ENCODE measurements at regions of chr3 and their contacts with region 1.

Region 1: GRCh38 chr3:39189959-39190269 is 2.5 kb downstream of the XIRP1 start:
- DNase-seq: peak; percentile 80
- H3K4me3 Mint-ChIP-seq: no peak overlapping the region
- H3K27ac Mint-ChIP-seq: no peak overlapping the region
- H3K4me1 Mint-ChIP-seq: peaks cover 7% of the 10 kb centered on the region
- H3K27me3 Mint-ChIP-seq: no peaks in the 10 kb centered on the region
- CTCF ChIP-seq: peak; percentile 69

Region 2: GRCh38 chr3:38960953-38961622 is 228.8 kb before region 1 on chr3:
- CTCF ChIA-PET with region 1: no interaction called
- POLR2A ChIA-PET with region 1: no interaction called
- intact Hi-C with region 1: no loop called
- DNase-seq: peak; percentile 53
- H3K4me3 Mint-ChIP-seq: no peak overlapping the region
- H3K27ac Mint-ChIP-seq: no peak overlapping the region
- H3K4me1 Mint-ChIP-seq: no peaks in the 10 kb centered on the region
- H3K27me3 Mint-ChIP-seq: no peaks in the 10 kb centered on the region
- CTCF ChIP-seq: peak; percentile 31

Region 3: GRCh38 chr3:39126532-39127071 is 63.3 kb before region 1 on chr3:
- CTCF ChIA-PET with region 1: interaction called, 46 read pairs
- POLR2A ChIA-PET with region 1: interaction called, 3 read pairs
- intact Hi-C with region 1: no loop called
- DNase-seq: peak; percentile 72
- H3K4me3 Mint-ChIP-seq: no peak overlapping the region
- H3K27ac Mint-ChIP-seq: no peak overlapping the region
- H3K4me1 Mint-ChIP-seq: peaks cover 12% of the 10 kb centered on the region
- H3K27me3 Mint-ChIP-seq: no peaks in the 10 kb centered on the region
- CTCF ChIP-seq: peak; percentile 51

Region 4: DNA sequence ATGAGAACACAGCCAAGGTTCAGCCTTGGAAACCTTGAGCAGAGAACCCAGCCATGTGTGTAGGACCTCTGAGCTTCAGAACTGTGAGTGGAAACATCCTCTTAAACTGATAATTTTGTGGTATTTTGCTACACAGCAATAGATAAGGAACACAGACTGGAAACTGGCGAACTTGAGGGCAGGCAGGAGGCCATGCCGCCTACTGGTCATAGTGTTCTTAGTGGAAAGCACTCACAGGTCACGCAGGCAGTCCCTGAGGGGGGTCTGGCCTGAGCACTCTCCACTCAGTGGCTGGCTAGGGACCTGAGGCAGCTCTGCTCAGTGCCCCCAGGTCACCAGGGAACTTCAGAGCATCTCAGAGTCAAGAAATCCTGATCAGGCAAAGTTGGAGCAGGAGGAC is 12.2 kb after region 1 on chr3:
- CTCF ChIA-PET with region 1: interaction called, 51 read pairs
- POLR2A ChIA-PET with region 1: interaction called, 3 read pairs
- intact Hi-C with region 1: no loop called
- DNase-seq: no peak
- H3K4me3 Mint-ChIP-seq: no peak overlapping the region
- H3K27ac Mint-ChIP-seq: no peak overlapping the region
- H3K4me1 Mint-ChIP-seq: no peaks in the 10 kb centered on the region
- H3K27me3 Mint-ChIP-seq: peaks cover 60% of the 10 kb centered on the region
- CTCF ChIP-seq: no peak

Region 5: GRCh38 chr3:39216176-39216790 is 26.4 kb after region 1 on chr3:
- CTCF ChIA-PET with region 1: interaction called, 18 read pairs
- POLR2A ChIA-PET with region 1: no interaction called
- intact Hi-C with region 1: no loop called
- DNase-seq: no peak
- H3K4me3 Mint-ChIP-seq: no peak overlapping the region
- H3K27ac Mint-ChIP-seq: no peak overlapping the region
- H3K4me1 Mint-ChIP-seq: no peaks in the 10 kb centered on the region
- H3K27me3 Mint-ChIP-seq: peaks cover 73% of the 10 kb centered on the region
- CTCF ChIP-seq: no peak

Region 6: GRCh38 chr3:39279745-39280517 is 90.0 kb after region 1 on chr3 and contains the start of gene CX3CR1:
- CTCF ChIA-PET with region 1: interaction called, 22 read pairs
- POLR2A ChIA-PET with region 1: no interaction called
- intact Hi-C with region 1: no loop called
- DNase-seq: no peak
- H3K4me3 Mint-ChIP-seq: no peak within 1 kb of the TSS
- H3K27ac Mint-ChIP-seq: no peak within 1 kb of the TSS
- H3K4me1 Mint-ChIP-seq: peaks cover 7% of the 10 kb centered on the region
- H3K27me3 Mint-ChIP-seq: peaks cover 26% of the 10 kb centered on the region
- CTCF ChIP-seq: no peak
- total RNA-seq, gene CX3CR1: not detected in 2 replicates

Measured in MCF 10A (cell line).